ENCODE measurements at regions of chr17 and their contacts with region 1.

Region 1: DNA sequence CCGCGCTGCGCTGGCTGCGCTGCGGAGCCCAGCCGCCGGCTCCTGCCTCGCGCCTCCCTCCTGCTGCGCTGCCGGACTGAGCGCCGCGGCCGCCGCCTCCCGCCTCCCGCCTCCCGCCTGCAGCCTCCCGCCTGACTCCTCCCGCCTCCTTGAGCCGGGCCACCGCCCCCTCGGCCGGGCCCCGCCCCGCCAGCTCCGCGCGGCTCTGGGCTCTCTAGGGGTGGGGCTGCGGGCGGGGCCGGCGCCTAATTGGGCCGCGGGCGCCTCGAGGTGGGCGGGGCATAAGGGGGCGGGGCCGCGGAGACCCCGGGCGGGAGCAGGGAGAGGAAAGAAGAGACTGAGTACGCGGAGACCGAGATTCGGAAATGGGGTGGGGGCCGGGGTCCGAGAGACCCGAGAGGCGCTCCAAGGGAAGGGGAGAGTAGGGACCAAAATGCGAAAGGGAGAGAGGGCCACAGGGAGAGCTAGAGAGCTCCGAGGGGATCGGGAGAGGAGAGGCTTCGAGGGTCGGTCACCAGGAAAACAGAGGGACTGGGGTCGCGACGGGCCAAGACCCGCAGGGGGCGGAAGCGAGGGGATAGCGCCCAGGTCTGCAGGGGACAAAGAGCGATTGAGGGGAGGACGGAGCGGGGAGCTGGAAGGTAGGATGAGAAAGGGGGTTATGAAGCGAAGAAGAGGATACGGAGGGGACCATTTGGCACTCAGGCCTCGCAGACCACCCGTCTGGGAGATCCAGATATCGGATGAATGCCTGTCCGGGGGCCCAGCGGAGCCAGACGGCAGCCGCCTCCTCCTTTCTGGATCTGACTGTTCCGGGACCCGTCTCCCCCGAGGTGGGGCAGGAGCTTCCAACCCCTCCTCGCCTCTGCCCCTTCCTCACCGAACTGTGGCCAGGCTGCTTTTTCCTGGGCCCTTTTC is at the start of gene C1QL1:
- DNase-seq: peak; percentile 68 to 94
- H3K4me3 ChIP-seq: peak within 1 kb of the TSS; percentile 62 to 84 (median 66)
- H3K27ac ChIP-seq: no peak within 1 kb of the TSS
- H3K4me1 ChIP-seq: peaks cover 3 to 34% (median 20%) of the 10 kb centered on the region in 4 experiments
- H3K27me3 ChIP-seq: peaks cover 28 to 57% (median 53%) of the 10 kb centered on the region in 4 experiments
- CTCF ChIP-seq: peak; percentile 51 to 64 (median 63)
- EP300 ChIP-seq: no peak
- POLR2A ChIP-seq: no peak
- RAD21 ChIP-seq: peak; percentile 30 to 52; a peak in 3 of 4 replicates
- total RNA-seq, gene C1QL1: 7.5 and 7.6 TPM in 2 replicates

Region 2: GRCh38 chr17:44979426-44979995 is 11.0 kb after region 1 on chr17:
- CTCF ChIA-PET with region 1: interaction called, 20 read pairs
- POLR2A ChIA-PET with region 1: interaction called, 8 read pairs
- DNase-seq: no peak
- H3K4me3 ChIP-seq: no peak overlapping the region
- H3K27ac ChIP-seq: no peak overlapping the region
- H3K4me1 ChIP-seq: peaks cover 0 to 11% (median 6%) of the 10 kb centered on the region in 4 experiments; a peak in 5 of 7 replicates
- H3K27me3 ChIP-seq: no peaks in the 10 kb centered on the region; a peak in 1 of 7 replicates
- CTCF ChIP-seq: no peak
- EP300 ChIP-seq: no peak
- POLR2A ChIP-seq: no peak
- RAD21 ChIP-seq: no peak

Region 3: DNA sequence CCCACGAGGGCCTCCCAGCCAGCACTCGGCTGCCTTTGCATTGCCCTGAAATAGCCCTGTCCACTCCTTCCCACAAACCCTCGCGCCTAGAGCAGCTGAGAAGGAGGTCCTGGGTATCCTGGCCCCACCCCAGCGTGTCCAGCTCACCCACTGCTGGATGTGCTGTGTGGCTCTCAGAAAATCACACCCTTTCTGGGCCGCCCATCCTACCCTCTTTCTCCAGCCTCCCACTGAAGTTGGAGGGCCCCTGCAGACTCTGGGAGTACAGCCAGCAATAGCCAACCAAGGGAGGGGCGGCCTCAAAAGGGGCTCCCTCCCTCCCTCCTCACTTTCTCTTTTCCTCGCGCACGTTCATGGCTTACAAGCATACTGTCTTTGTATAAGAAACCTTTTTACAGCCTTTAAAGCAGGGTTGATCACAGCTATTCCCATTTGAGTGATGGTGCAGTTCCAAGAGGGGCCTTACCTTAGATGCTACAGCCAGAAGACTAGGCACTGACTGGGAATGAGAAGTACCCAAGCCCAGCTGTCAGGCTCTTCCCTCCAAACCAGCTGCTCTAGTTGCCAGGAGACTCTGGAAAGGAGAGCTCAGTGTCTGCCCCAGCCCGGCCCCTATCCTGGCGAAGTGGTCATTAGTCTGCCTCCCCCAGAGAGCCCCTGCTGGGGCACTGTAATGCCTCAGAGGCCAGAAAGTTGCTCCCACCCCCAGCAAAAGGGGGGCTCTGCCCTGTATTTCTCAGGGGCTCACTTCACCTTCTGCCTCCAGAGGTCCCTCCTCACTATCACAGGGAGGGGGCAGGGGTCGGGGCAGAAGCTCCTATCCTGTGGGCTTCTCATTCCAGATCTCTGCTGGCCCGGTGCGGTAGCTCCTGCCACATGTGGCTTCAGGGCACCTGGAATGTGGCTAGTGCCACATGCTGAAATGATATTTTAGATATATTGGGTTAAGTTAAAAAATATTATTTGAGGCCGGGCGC is 44.8 kb after region 1 on chr17:
- CTCF ChIA-PET with region 1: interaction called, 10 read pairs
- POLR2A ChIA-PET with region 1: interaction called, 14 read pairs
- DNase-seq: peak in 1 of 2 experiments; percentile 64
- H3K4me3 ChIP-seq: no peak overlapping the region
- H3K27ac ChIP-seq: no peak overlapping the region
- H3K4me1 ChIP-seq: peaks cover 0 to 11% (median under 1%) of the 10 kb centered on the region in 4 experiments; a peak in 6 of 7 replicates
- H3K27me3 ChIP-seq: peaks cover 0 to 7% (median 6%) of the 10 kb centered on the region in 4 experiments; a peak in 5 of 7 replicates
- CTCF ChIP-seq: no peak
- EP300 ChIP-seq: no peak
- POLR2A ChIP-seq: no peak
- RAD21 ChIP-seq: no peak

Region 4: GRCh38 chr17:45031231-45032173 is 63.0 kb after region 1 on chr17:
- CTCF ChIA-PET with region 1: no interaction called
- POLR2A ChIA-PET with region 1: no interaction called
- DNase-seq: no peak
- H3K4me3 ChIP-seq: no peak overlapping the region
- H3K27ac ChIP-seq: no peak overlapping the region
- H3K4me1 ChIP-seq: no peaks in the 10 kb centered on the region
- H3K27me3 ChIP-seq: no peaks in the 10 kb centered on the region
- CTCF ChIP-seq: no peak
- EP300 ChIP-seq: no peak
- POLR2A ChIP-seq: no peak
- RAD21 ChIP-seq: no peak